ENCODE measurements at regions of chr9 and their contacts with region 1.

Region 1: GRCh38 chr9:36136272-36136893 is at the start of gene GLIPR2:
- DNase-seq: peak; percentile 52 to 89 (median 75)
- ATAC-seq: peak; percentile 96
- H3K4me3 ChIP-seq: peak within 1 kb of the TSS; percentile 79 to 82
- H3K4me3 Mint-ChIP-seq: peak within 1 kb of the TSS; percentile 92
- H3K27ac ChIP-seq: peak within 1 kb of the TSS; percentile 56 to 58
- H3K27ac Mint-ChIP-seq: peak within 1 kb of the TSS; percentile 86
- H3K4me1 ChIP-seq: peaks cover 47% of the 10 kb centered on the region
- H3K4me1 Mint-ChIP-seq: peaks cover 49% of the 10 kb centered on the region
- H3K27me3 ChIP-seq: no peaks in the 10 kb centered on the region
- H3K27me3 Mint-ChIP-seq: no peaks in the 10 kb centered on the region
- CTCF ChIP-seq: peak; percentile 26
- total RNA-seq, gene GLIPR2: 8.6 to 10.2 TPM

Region 2: GRCh38 chr9:36148311-36149051 is 12.1 kb after region 1 on chr9:
- CTCF ChIA-PET with region 1: interaction called, 14 read pairs
- POLR2A ChIA-PET with region 1: interaction called, 16 read pairs
- intact Hi-C with region 1: loop called (anchors 1 kb)
- DNase-seq: peak; percentile 44 to 89 (median 79)
- ATAC-seq: peak; percentile 6
- H3K4me3 ChIP-seq: no peak overlapping the region
- H3K4me3 Mint-ChIP-seq: peak overlapping the region; percentile 8
- H3K27ac ChIP-seq: peak overlapping the region in 1 of 2 experiments; percentile 28
- H3K27ac Mint-ChIP-seq: peak overlapping the region; percentile 71
- H3K4me1 ChIP-seq: peaks cover 90% of the 10 kb centered on the region
- H3K4me1 Mint-ChIP-seq: peaks cover 87% of the 10 kb centered on the region
- H3K27me3 ChIP-seq: no peaks in the 10 kb centered on the region
- H3K27me3 Mint-ChIP-seq: no peaks in the 10 kb centered on the region
- CTCF ChIP-seq: no peak

Region 3: DNA sequence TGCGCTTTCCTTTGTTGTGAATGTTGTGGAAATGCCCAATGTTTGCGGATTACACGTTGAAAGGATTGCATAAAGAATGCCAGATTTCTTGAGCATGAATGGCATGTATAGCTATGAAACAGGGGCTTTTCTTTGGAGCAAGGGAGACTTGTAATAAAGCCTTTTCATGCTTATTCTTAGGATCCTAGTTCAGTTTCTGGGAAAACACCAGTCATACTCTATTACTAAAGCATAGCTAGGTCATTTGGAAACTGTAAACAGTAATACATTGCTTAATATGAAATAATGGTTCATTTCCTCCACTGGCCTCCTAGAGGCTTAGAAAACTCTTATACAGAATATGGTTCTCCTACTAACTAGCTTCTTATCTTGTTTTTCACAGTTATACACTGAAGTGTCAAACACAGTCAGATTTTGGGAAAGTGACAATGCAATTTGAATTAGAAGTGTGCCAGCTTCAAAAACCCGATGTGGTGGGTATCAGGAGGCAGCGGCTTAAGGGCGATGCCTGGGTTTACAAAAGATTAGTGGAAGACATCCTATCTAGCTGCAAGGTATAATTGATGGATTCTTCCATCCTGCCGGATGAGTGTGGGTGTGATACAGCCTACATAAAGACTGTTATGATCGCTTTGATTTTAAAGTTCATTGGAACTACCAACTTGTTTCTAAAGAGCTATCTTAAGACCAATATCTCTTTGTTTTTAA is 540.5 kb after region 1 on chr9:
- CTCF ChIA-PET with region 1: no interaction called
- POLR2A ChIA-PET with region 1: no interaction called
- intact Hi-C with region 1: no loop called
- DNase-seq: no peak
- ATAC-seq: no peak
- H3K4me3 ChIP-seq: no peak overlapping the region
- H3K4me3 Mint-ChIP-seq: no peak overlapping the region
- H3K27ac ChIP-seq: no peak overlapping the region
- H3K27ac Mint-ChIP-seq: no peak overlapping the region
- H3K4me1 ChIP-seq: no peaks in the 10 kb centered on the region
- H3K4me1 Mint-ChIP-seq: no peaks in the 10 kb centered on the region
- H3K27me3 ChIP-seq: no peaks in the 10 kb centered on the region
- H3K27me3 Mint-ChIP-seq: no peaks in the 10 kb centered on the region
- CTCF ChIP-seq: no peak